ENCODE measurements at regions of chr1 and their contacts with region 1.

Region 1: DNA sequence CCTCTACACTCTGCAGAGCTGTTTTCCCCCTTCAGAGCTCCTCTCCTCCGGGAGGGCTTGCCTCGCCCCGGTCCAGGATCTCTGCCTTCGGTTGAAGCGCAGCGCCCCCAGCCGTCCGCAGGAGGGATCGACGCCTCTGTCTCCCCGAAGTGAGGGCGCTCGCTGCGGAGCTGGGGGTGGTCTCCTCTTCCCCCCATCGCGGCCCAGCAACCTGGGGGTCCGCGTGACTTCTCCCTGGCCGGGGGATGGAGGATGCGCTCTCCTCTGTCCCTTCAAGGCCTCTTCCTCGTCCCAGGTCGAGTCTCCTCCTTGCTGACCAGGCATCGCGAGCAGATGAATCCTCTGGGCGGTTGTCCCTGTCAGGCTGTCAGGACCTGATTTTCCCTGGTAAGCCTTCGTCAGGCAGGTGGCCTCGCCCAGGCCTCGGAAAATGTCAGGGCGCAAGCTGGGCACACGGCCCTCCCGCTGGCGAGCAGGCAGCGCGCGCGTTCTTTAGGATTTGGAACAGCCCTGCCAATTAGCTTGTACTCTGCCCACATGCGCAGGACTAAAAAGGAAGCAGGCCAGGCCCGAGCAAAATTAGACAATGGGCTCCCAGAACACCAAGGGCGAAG is 90.5 kb downstream of the EDEM3 start:
- DNase-seq: peak; percentile 75 to 91 (median 81)
- ATAC-seq: peak; percentile 89 to 96 (median 94)
- H3K4me3 ChIP-seq: peak overlapping the region in 11 of 12 donors; percentile 6 to 60 (median 47)
- H3K27ac ChIP-seq: peak overlapping the region in 5 of 12 donors; percentile 19 to 58 (median 52)
- H3K4me1 ChIP-seq: peaks cover 0 to 13% (median 10%) of the 10 kb centered on the region in 12 donors
- H3K27me3 ChIP-seq: no peaks in the 10 kb centered on the region
- CTCF ChIP-seq: peak; percentile 89 to 98 (median 96)
- POLR2A ChIP-seq: no peak

Region 2: DNA sequence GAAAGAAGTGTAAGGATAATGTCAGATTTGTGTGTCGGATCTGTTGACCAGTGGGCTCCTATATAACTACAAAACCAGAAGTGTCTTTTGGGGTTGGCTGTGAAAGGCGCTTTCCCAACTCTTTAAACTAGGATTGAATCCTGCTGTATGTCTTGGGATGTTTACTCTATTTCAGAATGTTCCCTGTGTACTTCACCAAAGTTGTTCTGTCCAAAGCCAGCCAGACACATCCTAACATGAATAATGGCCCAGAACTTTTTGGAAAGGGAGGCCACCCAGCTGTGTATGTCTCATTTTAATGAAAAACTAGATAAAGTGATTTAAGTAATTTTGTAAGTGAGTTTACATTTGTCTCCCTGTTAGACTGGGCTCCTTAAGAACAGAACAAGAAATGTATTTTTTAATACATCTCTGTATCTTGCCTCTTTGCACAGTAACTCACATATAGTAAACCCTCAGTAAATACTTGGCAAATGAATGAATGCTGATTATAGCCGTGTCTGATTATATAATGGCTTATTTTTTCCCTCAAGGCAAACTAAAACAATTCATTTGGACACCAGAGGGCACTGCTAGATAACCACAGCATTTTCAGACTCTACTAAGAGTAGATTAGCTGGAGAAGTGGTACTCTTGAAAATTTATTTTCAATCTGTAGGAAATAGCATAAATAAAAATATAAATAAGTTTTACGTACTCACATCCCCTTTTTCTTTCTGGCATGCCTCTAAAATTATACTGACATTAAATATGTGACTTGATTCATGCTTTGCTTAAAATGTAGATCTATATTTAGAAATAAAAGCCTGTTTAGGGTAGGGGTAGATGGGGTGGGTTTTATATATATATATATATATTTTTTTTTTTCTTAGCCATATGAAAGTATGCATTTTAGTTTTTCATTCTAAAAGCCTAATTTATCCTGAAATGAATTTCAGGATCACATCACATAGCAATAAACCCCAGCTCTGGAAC is 588.8 kb before region 1 on chr1:
- intact Hi-C with region 1: loop called (anchors 2 to 10 kb)
- DNase-seq: peak in 2 of 5 donors; percentile 41 to 44
- ATAC-seq: peak; percentile 68 to 89 (median 81)
- H3K4me3 ChIP-seq: no peak overlapping the region
- H3K27ac ChIP-seq: peak overlapping the region; percentile 4 to 69 (median 55)
- H3K4me1 ChIP-seq: peaks cover 0 to 40% (median 9%) of the 10 kb centered on the region in 12 donors
- H3K27me3 ChIP-seq: no peaks in the 10 kb centered on the region
- CTCF ChIP-seq: peak; percentile 66 to 87 (median 80)
- POLR2A ChIP-seq: no peak

Region 3: DNA sequence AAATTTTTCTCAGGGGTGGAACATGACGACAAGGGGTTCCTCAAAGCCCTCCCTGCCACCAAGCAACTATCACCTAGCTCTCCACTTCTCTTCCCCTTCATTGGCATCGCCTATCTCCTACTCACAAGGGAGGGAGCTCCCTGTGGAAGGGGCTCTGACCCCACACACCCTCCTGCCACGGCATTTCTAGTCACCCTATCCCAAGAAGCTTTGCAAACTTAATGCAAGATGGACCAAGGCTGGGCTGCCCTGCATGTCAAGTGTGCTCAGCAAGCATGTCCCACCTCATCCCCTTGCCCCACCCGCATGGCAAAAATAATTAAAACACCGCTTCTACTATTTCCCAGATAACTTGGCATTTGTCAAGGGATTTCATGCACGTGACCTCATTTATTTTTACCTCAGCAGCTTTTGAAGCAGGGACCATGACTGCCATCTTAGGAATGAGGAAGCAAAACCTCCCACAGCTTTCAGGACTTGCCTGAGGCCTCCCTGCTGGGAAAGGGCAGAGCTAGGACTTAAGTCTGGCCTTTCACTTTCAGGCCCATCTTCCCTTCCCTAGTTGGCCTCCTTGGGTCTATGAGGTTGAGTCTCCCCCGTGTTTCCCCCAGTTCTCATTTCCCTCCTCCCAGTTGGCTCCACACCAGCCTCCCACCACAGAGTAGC is 451.4 kb before region 1 on chr1:
- intact Hi-C with region 1: no loop called
- DNase-seq: no peak
- ATAC-seq: peak in 1 of 4 donors; percentile 42
- H3K4me3 ChIP-seq: no peak overlapping the region
- H3K27ac ChIP-seq: no peak overlapping the region
- H3K4me1 ChIP-seq: peaks cover 0 to 20% (median 0%) of the 10 kb centered on the region in 12 donors
- H3K27me3 ChIP-seq: no peaks in the 10 kb centered on the region
- CTCF ChIP-seq: no peak
- POLR2A ChIP-seq: no peak

Region 4: DNA sequence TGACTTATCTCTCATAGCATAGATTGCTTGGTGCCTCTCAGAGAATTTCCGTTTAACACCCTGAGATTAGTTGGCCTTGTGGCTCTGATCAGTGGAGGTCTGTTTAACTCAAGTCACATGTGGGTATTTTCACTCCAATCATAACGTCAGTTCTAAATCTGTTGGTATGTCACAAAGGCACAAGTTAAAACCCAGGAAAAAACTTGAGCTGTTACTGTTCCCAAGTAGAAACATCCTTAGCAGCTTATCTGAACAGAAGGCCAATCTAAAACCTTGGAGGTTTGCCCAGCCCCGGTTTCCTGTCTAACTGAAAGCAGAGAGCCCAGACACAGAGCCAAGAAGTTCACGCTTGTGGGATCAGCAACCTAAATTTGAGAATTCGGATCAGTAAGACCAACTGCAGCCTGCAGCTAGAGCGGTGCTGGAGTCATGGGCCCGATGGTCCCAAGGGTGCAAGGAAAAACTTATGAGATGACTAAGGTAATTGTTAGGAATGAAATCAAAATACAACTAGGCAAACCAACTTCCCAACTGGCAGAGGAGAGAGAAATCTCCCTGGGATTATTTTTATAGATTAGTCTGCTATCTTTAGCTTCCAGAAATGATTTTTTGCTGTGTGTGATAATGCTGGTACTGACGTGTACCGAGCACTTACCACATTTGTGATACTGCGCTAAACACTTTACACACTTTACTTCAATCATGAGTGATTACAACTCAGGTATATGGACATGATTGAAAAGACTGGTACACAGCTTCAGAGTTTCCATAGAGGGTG is 367.5 kb before region 1 on chr1:
- intact Hi-C with region 1: loop called in 1 of 10 experiments (anchors 5 kb)
- DNase-seq: peak; percentile 83 to 96 (median 95)
- ATAC-seq: peak; percentile 91 to 95 (median 93)
- H3K4me3 ChIP-seq: peak overlapping the region in 7 of 12 donors; percentile 0 to 27 (median 21)
- H3K27ac ChIP-seq: peak overlapping the region; percentile 79 to 92 (median 86)
- H3K4me1 ChIP-seq: peaks cover 2 to 58% (median 39%) of the 10 kb centered on the region in 12 donors
- H3K27me3 ChIP-seq: no peaks in the 10 kb centered on the region
- CTCF ChIP-seq: no peak
- POLR2A ChIP-seq: no peak

Region 5: DNA sequence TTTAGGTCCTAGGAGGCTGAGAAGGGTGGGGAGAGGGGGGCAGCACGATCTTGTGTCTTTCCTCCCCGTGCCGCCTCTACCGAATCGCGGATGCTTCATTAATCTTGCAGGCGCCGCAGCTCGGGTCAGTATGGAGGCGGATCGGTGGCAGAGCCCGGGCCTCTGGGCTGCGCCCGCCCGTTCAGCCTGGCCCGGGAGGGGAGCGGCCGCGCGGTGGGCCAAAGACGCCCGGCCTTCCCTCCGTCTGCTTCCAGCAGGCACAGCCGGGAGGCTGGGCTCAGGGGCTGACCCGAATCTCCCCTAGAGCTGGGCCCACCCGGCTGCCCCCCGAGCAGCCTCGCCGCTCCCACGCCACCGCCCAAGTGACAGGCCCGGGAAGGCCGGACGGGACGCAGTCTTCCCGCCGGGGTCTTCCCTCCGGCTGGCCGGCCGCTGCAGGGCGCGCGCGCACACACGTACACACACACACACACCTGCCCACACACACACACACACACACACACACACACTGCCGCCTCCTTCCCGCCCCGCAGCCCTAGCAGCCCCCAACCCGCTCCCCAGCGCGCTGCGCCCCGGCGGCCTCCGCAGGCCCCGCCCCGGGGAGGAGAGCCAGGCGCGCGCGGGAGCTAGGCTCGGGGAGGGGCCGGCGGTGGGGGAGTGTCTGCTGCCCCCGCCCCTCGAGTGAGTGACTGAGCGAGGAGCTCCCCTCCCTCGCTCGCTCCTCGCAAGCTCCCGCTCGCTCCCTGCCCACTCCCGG is 277.7 kb before region 1 on chr1 and contains the start of gene C1orf21:
- intact Hi-C with region 1: loop called in 8 of 10 experiments (anchors 1 to 10 kb)
- DNase-seq: peak; percentile 93 to 94 (median 93)
- ATAC-seq: peak; percentile 91 to 97 (median 95)
- H3K4me3 ChIP-seq: peak within 1 kb of the TSS; percentile 85 to 99 (median 94)
- H3K27ac ChIP-seq: peak within 1 kb of the TSS; percentile 84 to 97 (median 92)
- H3K4me1 ChIP-seq: peaks cover 0 to 38% (median 29%) of the 10 kb centered on the region in 12 donors
- H3K27me3 ChIP-seq: no peaks in the 10 kb centered on the region
- CTCF ChIP-seq: no peak
- POLR2A ChIP-seq: peak; percentile 80 to 94
- total RNA-seq, gene C1orf21: 57.5 to 81.3 (median 69.2) TPM

Region 6: GRCh38 chr1:184483101-184483683 is 181.0 kb before region 1 on chr1:
- intact Hi-C with region 1: loop called in 1 of 10 experiments (anchors 10 kb)
- DNase-seq: peak in 2 of 5 donors; percentile 57
- ATAC-seq: peak in 3 of 4 donors; percentile 33 to 60 (median 33)
- H3K4me3 ChIP-seq: no peak overlapping the region
- H3K27ac ChIP-seq: peak overlapping the region; percentile 17 to 79 (median 70)
- H3K4me1 ChIP-seq: peaks cover 11 to 86% (median 71%) of the 10 kb centered on the region in 12 donors
- H3K27me3 ChIP-seq: no peaks in the 10 kb centered on the region
- CTCF ChIP-seq: peak in 7 of 12 donors; percentile 8 to 40 (median 21)
- POLR2A ChIP-seq: no peak

Region 7: GRCh38 chr1:184563308-184563707 is 100.8 kb before region 1 on chr1:
- intact Hi-C with region 1: loop called in 8 of 10 experiments (anchors 5 kb)
- DNase-seq: no peak
- ATAC-seq: peak in 3 of 4 donors; percentile 26 to 63 (median 53)
- H3K4me3 ChIP-seq: no peak overlapping the region
- H3K27ac ChIP-seq: peak overlapping the region in 9 of 12 donors; percentile 15 to 73 (median 56)
- H3K4me1 ChIP-seq: peaks cover 0 to 38% (median 30%) of the 10 kb centered on the region in 12 donors
- H3K27me3 ChIP-seq: no peaks in the 10 kb centered on the region
- CTCF ChIP-seq: peak; percentile 16 to 77 (median 62)
- POLR2A ChIP-seq: no peak

Region 8: GRCh38 chr1:184622136-184622823 is 41.9 kb before region 1 on chr1:
- intact Hi-C with region 1: loop called in 1 of 10 experiments (anchors 5 kb)
- DNase-seq: peak; percentile 59 to 87 (median 73)
- ATAC-seq: peak; percentile 84 to 87 (median 86)
- H3K4me3 ChIP-seq: no peak overlapping the region
- H3K27ac ChIP-seq: peak overlapping the region; percentile 51 to 94 (median 81)
- H3K4me1 ChIP-seq: peaks cover 3 to 72% (median 57%) of the 10 kb centered on the region in 12 donors
- H3K27me3 ChIP-seq: no peaks in the 10 kb centered on the region
- CTCF ChIP-seq: peak in 4 of 12 donors; percentile 4 to 30 (median 10)
- POLR2A ChIP-seq: no peak

Region 9: DNA sequence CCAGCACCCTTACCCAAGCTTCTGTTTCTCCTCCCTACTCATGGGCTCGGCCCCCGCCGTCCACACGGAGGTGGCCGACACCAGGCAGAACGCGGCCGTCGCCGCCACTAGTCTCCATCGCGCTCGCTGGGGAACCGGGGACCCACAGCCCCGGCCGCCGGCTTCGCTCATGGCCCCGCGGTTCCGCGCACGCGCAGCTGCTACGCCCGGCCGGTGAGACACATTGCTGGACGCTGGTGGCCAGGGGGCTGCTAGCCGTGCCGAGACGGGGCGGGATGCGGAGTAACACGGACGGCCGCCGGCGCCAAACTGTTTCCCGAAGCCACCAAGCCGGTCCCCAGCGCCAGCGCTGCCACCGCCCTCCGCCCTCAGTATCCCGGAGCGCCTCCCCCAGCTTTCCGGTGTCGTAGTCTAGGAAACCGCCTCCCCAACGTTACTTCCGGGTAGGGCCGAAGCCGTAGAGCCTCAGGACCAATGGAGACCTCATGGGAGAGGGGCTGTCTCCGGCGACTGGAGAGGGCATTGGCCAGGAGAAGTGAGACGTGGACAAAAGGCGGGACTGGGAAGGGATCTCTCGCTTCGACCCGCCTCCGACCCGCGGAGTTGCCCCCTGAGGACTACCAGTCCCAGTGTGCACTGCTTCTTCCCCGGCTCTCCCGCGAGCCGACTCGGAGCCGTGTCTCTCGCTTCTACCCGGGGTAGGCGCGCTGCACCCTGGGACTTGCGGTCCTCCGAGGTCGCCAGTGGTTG is 90.5 kb after region 1 on chr1 and contains the start of gene EDEM3:
- intact Hi-C with region 1: no loop called
- DNase-seq: peak; percentile 99 to 100 (median 100)
- ATAC-seq: peak; percentile 98 to 99 (median 99)
- H3K4me3 ChIP-seq: peak within 1 kb of the TSS; percentile 61 to 98 (median 88)
- H3K27ac ChIP-seq: peak within 1 kb of the TSS; percentile 79 to 97 (median 93)
- H3K4me1 ChIP-seq: peaks cover 0 to 41% (median 19%) of the 10 kb centered on the region in 12 donors
- H3K27me3 ChIP-seq: no peaks in the 10 kb centered on the region
- CTCF ChIP-seq: no peak
- POLR2A ChIP-seq: peak; percentile 89 to 96
- total RNA-seq, gene EDEM3: 14.3 to 28.6 (median 18.8) TPM